Testis (tissue), 5 donors: ENCODE measurements at regions of chr2 and their contacts with region 1.

Region 1: DNA sequence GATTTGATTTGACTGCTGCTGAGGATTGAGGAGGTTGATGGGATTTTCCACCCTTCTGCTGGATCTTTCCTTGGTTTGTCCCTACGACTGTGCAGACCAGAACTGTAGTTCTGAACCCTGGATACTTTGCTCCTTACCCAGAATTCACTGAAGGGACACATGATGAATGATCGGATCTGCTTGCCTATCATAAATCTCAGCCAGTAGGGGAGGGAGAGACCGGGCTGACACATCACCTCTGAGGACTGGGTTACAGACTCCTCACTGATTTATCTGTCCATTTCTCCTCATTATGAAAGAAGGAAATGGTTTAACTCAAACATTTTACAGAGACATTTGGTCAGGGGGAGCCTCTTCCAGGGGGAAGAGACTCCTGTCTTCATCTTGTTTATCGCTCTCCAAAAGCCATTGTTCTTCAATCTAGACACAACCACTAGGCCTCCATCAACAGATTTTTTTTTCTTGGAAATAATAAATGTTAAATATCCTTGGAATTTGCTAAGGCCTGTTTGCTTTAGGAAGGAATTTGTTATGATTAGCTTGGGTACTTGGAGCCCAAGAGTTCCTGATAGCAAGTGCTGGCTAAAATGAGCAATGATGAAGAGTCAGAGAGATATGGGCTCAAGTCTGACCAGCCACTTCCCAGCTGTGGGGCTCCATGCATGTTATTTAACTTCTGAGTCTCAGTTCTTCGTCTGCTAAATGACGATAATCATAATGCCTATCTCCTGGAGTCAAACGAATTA is 925.5 kb downstream of the SLC4A3 start:
- DNase-seq: no peak
- H3K4me3 ChIP-seq: no peak overlapping the region
- H3K27ac ChIP-seq: no peak overlapping the region
- H3K4me1 ChIP-seq: no peaks in the 10 kb centered on the region
- H3K27me3 ChIP-seq: no peaks in the 10 kb centered on the region
- CTCF ChIP-seq: no peak
- POLR2A ChIP-seq: no peak

Region 2: DNA sequence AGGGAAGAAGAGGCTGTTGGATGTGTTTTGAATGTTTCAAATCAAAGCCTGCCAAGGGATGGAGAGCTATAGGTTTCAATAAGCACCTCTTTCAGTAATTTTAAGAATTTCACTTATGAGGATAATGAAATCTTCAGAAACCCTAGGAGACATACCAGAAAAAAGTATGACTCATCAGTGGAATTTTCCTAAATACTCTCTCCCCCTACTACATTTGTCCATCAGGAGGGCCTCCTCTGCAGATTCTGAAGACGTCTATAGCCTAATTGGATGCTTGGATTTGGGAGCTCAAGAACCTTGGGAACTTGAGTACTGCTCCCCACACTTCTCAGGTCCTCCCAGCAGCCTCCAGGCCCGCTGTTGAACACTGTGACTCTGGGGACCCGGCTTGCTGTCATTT is 551.2 kb before region 1 on chr2:
- intact Hi-C with region 1: loop called (anchors 5 kb)
- DNase-seq: no peak
- H3K4me3 ChIP-seq: no peak overlapping the region
- H3K27ac ChIP-seq: peak overlapping the region; percentile 54 to 70
- H3K4me1 ChIP-seq: peaks cover 29% of the 10 kb centered on the region
- H3K27me3 ChIP-seq: no peaks in the 10 kb centered on the region
- CTCF ChIP-seq: no peak
- POLR2A ChIP-seq: no peak

Region 3: GRCh38 chr2:220455351-220455990 is 97.5 kb before region 1 on chr2:
- intact Hi-C with region 1: no loop called
- DNase-seq: no peak
- H3K4me3 ChIP-seq: no peak overlapping the region
- H3K27ac ChIP-seq: no peak overlapping the region
- H3K4me1 ChIP-seq: no peaks in the 10 kb centered on the region
- H3K27me3 ChIP-seq: no peaks in the 10 kb centered on the region
- CTCF ChIP-seq: no peak
- POLR2A ChIP-seq: no peak

Region 4: GRCh38 chr2:220499225-220499624 is 53.7 kb before region 1 on chr2:
- intact Hi-C with region 1: no loop called
- DNase-seq: no peak
- H3K4me3 ChIP-seq: no peak overlapping the region
- H3K27ac ChIP-seq: no peak overlapping the region
- H3K4me1 ChIP-seq: no peaks in the 10 kb centered on the region
- H3K27me3 ChIP-seq: no peaks in the 10 kb centered on the region
- CTCF ChIP-seq: no peak
- POLR2A ChIP-seq: no peak

Region 5: DNA sequence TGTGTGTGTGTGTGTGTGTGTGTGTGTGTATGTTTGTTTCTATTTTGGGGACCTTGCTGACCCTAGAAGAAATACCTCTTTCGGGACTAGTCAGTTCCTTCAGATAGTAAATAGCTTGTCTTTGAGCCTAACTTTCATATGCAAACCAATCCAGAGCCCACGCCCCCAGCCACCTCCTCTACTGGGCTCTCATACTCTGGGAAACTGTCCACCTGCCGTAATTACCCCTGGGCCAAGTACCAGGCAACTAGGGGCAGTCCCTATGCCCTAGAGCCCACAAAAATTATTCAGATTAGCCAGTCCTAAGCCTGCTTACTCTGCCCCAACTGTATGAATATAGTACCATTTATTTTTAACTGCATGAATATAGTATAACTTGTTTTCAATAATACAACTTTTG is 48.7 kb after region 1 on chr2:
- intact Hi-C with region 1: no loop called
- DNase-seq: no peak
- H3K4me3 ChIP-seq: no peak overlapping the region
- H3K27ac ChIP-seq: no peak overlapping the region
- H3K4me1 ChIP-seq: no peaks in the 10 kb centered on the region
- H3K27me3 ChIP-seq: no peaks in the 10 kb centered on the region
- CTCF ChIP-seq: no peak
- POLR2A ChIP-seq: no peak